ENCODE measurements at regions of chr12 and their contacts with region 1.

Region 1: GRCh38 chr12:14403711-14404196 is 38.3 kb downstream of the ATF7IP start:
- DNase-seq: no peak
- ATAC-seq: peak; percentile 88

Region 2: GRCh38 chr12:14443531-14443930 is 39.8 kb after region 1 on chr12:
- intact Hi-C with region 1: loop called (anchors 5 kb)
- DNase-seq: no peak
- ATAC-seq: peak; percentile 46

Region 3: GRCh38 chr12:14589169-14590004 is 185.6 kb after region 1 on chr12:
- intact Hi-C with region 1: no loop called
- DNase-seq: no peak
- ATAC-seq: no peak

Region 4: GRCh38 chr12:14605401-14605989 is 201.7 kb after region 1 on chr12:
- intact Hi-C with region 1: no loop called
- DNase-seq: no peak
- ATAC-seq: no peak